ENCODE measurements at regions of chr4 and their contacts with region 1.

Region 1: DNA sequence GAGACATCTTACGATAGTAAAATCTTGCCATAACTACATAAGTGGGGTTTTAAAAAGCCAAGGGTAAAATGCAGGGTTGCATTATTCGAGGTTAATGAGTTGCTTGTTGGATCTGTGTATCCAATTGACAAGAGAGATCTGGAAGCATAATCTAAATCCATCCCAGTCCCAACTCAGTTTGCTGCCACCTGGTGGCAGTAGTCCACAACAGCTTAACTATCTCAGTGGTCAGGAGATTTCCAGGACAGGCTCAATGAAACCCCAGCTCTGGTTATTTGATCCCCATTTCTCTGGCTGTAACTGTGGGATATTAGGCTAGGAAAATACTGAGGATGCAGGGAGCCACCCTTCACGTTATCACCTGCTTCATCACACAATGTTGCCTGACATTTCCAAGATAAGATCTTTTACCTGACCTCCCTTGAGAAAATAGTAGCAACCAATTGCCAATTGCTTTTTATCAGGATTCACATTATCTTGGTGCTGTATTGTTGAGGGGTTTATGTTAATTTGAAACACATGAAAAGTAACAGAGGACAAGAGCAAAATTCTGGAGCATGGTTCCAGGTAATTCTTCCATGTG is 88.2 kb upstream of the TNIP3 start:
- DNase-seq: peak in 31 of 35 experiments; percentile 10 to 80 (median 41)
- ATAC-seq: no peak
- H3K4me3 ChIP-seq: no peak overlapping the region
- H3K4me3 Mint-ChIP-seq: no peak overlapping the region
- H3K27ac ChIP-seq: peak overlapping the region; percentile 82
- H3K27ac Mint-ChIP-seq: peak overlapping the region in 1 of 2 donors; percentile 15
- H3K4me1 ChIP-seq: peaks cover 16 to 39% of the 10 kb centered on the region in 2 experiments
- H3K4me1 Mint-ChIP-seq: peaks cover 59 to 62% (median 60%) of the 10 kb centered on the region in 3 donors
- H3K27me3 ChIP-seq: no peaks in the 10 kb centered on the region
- H3K27me3 Mint-ChIP-seq: no peaks in the 10 kb centered on the region

Region 2: GRCh38 chr4:121448231-121448630 is 195.9 kb after region 1 on chr4:
- CTCF ChIA-PET with region 1: no interaction called
- POLR2A ChIA-PET with region 1: no interaction called
- DNase-seq: no peak
- ATAC-seq: no peak
- H3K4me3 ChIP-seq: no peak overlapping the region
- H3K4me3 Mint-ChIP-seq: no peak overlapping the region
- H3K27ac ChIP-seq: no peak overlapping the region
- H3K27ac Mint-ChIP-seq: no peak overlapping the region
- H3K4me1 ChIP-seq: no peaks in the 10 kb centered on the region
- H3K4me1 Mint-ChIP-seq: no peaks in the 10 kb centered on the region
- H3K27me3 ChIP-seq: no peaks in the 10 kb centered on the region
- H3K27me3 Mint-ChIP-seq: peaks cover 5 to 27% of the 10 kb centered on the region in 2 donors

Region 3: DNA sequence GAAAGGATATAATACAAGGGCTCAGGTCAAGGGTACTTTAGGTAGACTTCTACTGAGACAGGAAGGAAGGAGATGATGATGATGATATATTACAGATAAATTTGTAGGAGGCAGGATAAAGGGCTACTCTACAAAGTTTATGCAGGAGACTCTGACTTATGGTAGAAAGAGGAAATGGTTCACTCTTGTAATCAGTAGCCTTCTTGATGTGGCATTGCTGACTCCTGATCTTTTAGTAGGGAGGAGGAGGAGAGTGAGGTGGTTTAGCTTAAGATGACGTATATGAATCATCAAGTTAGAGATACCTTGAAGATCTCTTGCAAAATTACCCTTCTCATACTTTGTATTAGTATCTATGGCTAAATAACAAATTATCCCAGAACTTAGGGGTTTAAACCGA is 904.5 kb after region 1 on chr4:
- CTCF ChIA-PET with region 1: interaction called in 1 of 2 experiments, 11 read pairs
- POLR2A ChIA-PET with region 1: no interaction called
- DNase-seq: peak in 1 of 35 experiments; percentile 43
- ATAC-seq: peak in 1 of 4 experiments; percentile 25
- H3K4me3 ChIP-seq: no peak overlapping the region
- H3K4me3 Mint-ChIP-seq: no peak overlapping the region
- H3K27ac ChIP-seq: no peak overlapping the region
- H3K27ac Mint-ChIP-seq: peak overlapping the region; percentile 20 to 46
- H3K4me1 ChIP-seq: peaks cover 5 to 12% of the 10 kb centered on the region in 2 experiments
- H3K4me1 Mint-ChIP-seq: peaks cover 64 to 68% (median 68%) of the 10 kb centered on the region in 3 donors
- H3K27me3 ChIP-seq: no peaks in the 10 kb centered on the region
- H3K27me3 Mint-ChIP-seq: no peaks in the 10 kb centered on the region